AG04449 (cell line): ENCODE measurements at regions of chr11 and their contacts with region 1.

Region 1: DNA sequence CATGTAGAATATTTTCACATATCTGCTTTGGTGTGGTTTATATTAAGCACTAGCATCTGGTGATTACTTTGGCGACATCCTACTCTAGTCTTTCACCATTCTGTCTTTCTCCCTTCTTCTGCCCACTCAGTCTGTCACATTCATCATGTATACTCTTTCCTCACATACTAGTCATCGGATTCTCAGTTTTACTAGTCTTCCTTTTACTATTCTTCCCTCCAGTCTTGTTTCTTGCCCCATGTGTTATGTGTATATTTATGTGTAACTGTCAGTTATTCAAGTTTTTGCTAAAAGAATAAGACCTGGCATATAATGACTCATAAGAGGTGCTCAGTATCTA is 4.6 kb upstream of the DIXDC1 start:
- DNase-seq: no peak
- H3K4me3 ChIP-seq: no peak overlapping the region
- CTCF ChIP-seq: no peak

Region 2: GRCh38 chr11:111911563-111912401 is 20.8 kb before region 1 on chr11 and contains the start of gene CRYAB:
- CTCF ChIA-PET with region 1: interaction called, 13 read pairs
- POLR2A ChIA-PET with region 1: interaction called, 10 read pairs
- DNase-seq: peak; percentile 95
- H3K4me3 ChIP-seq: peak within 1 kb of the TSS; percentile 50
- CTCF ChIP-seq: no peak

Region 3: GRCh38 chr11:112002491-112003216 is 70.1 kb after region 1 on chr11:
- CTCF ChIA-PET with region 1: interaction called, 102 read pairs
- POLR2A ChIA-PET with region 1: no interaction called
- DNase-seq: no peak
- H3K4me3 ChIP-seq: no peak overlapping the region
- CTCF ChIP-seq: no peak

Region 4: GRCh38 chr11:112074026-112074811 is 141.6 kb after region 1 on chr11 and contains the start of gene NKAPD1:
- CTCF ChIA-PET with region 1: no interaction called
- POLR2A ChIA-PET with region 1: no interaction called
- DNase-seq: peak; percentile 51
- H3K4me3 ChIP-seq: peak within 1 kb of the TSS; percentile 97
- CTCF ChIP-seq: no peak